ENCODE measurements at regions of chr1 and their contacts with region 1.

Region 1: DNA sequence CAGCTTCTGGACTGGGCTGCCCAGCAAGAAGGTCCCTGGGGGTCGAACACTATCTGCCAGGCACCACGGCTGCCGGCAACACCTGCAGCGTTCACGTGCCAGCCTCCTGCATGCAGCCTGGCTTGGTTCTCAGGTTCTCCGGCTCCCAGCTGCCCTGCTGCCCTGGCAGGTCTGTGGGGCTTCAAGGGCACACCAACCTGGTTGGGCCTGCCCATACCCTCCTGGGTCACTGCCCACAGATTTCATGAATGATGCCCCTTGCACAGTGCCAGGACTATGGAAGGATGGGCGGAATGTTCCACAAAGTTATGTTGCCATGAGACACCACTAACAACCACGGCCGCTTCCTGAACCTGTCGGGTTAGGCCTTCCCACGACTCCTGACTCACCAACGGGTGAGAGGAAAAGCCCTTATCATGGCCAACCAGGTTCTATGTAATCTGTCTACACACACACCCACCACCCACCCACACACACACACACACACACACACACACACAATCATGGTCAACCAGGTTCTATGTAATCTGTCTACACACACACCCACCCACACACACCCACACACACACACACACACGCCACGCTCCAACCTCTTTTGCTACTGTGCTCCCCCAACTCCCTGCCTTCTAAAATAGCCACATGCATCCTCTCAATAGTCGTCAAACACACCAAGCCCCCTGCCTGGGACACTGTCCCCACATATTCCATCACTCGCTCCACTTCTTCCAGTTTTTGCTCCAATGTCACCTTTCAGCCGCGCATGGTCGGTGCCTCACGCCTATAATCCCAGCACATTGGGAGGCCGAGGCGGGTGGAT is 32.2 kb downstream of the HSPG2 start:
- DNase-seq: peak in 1 of 5 donors; percentile 54
- H3K4me3 ChIP-seq: no peak overlapping the region
- H3K27ac ChIP-seq: no peak overlapping the region
- H3K4me1 ChIP-seq: peaks cover 23% of the 10 kb centered on the region
- H3K27me3 ChIP-seq: no peaks in the 10 kb centered on the region
- CTCF ChIP-seq: no peak
- EP300 ChIP-seq: no peak
- POLR2A ChIP-seq: no peak

Region 2: DNA sequence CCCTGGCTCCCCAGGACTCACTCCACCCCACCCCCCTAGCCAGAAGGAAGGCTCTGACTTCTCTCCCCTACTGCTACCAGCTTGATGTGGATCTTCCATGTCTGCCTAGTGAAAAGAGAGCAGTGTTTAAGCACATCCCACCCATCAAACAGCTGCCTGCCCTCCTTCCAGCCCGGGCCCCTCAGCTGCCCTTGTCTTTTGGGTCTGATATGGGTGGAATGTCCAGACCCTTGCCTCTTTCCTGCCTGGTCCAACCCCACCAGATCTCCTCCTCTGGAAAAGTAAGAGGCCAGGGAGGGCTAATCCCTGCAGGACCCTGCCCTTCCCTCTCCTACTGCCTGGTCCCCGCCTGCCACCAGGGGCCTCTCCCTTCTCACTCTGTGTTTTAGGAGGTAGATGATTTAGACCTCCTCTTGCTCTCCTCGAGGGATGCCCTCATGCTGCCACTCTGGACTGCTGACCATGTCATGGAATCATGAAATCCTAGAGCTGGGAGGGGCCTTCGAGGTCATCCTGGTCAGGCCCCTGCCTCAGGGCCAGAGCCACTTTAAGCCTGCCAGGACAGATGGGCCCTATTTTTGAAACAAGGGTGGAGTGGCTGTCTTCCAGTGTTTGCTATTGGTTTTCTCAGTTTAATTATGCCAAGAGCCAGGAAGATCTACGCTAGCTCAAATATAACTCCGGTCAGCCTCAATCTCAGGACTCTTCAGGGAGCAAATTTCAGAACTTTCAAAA is 48.0 kb after region 1 on chr1:
- intact Hi-C with region 1: loop called in 1 of 4 experiments (anchors 5 kb)
- DNase-seq: no peak
- H3K4me3 ChIP-seq: no peak overlapping the region
- H3K27ac ChIP-seq: no peak overlapping the region
- H3K4me1 ChIP-seq: peaks cover 3% of the 10 kb centered on the region
- H3K27me3 ChIP-seq: no peaks in the 10 kb centered on the region
- CTCF ChIP-seq: no peak
- EP300 ChIP-seq: no peak
- POLR2A ChIP-seq: no peak

Measured in ovary (tissue), 10 donors.